Breast epithelium (tissue), 4 donors: ENCODE measurements at regions of chr6 and their contacts with region 1.

Region 1: DNA sequence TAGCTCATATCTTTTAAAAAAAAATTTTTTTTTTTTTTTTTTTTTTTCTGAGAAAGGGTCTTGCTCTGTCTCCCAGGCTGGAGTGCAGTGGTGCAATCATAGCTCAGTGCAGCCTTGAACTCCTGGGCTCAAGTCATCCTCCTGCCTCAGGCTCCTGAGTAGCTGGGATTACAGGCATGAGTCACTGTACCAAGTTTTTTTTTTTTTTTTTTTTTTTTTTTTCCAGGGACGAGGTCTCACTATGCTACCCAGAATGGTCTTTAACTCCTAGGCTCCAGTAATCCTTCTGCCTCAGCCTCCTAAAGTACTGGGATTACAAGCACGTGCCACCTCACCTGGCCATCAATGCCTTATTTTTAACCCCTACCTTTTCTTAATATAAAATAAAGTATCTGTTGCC is 27.8 kb downstream of the GCLC start:
- DNase-seq: no peak
- H3K4me3 ChIP-seq: no peak overlapping the region
- H3K27ac ChIP-seq: no peak overlapping the region
- H3K4me1 ChIP-seq: no peaks in the 10 kb centered on the region
- H3K27me3 ChIP-seq: no peaks in the 10 kb centered on the region
- CTCF ChIP-seq: no peak
- POLR2A ChIP-seq: no peak

Region 2: DNA sequence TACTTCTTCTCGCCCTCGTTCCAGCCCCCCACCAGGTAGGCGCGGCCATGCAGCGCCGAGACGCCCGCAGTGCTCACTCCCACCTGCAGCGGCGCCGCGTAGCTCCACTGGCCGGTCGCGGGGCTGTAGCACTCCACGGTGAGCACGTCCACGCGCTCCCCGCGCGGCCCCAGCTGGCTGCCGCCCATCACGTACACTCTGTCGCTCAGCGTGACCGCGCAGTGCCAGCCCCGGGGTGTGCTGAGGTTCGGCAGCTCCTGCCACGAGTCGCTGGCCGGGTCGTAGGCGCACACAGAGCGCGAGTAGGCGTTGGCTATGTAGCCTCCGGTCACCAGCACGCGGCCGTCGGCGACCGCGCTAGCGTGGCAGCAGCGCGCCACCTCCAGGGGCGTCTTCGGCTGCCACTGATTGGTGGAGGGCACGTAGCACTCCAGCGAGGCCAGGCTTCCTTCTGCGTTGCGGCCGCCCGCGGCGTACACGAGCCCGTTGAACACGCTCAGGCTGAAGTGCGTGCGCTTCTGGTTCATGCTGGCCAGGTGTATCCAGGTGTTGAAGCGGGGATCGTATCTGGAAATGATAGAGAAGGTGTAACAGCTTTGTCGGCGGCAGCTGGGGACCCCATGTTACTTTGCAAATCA is 134.8 kb after region 1 on chr6:
- intact Hi-C with region 1: loop called (anchors 10 kb)
- DNase-seq: peak; percentile 52 to 75
- H3K4me3 ChIP-seq: peak overlapping the region; percentile 45 to 90 (median 67)
- H3K27ac ChIP-seq: peak overlapping the region; percentile 74 to 86
- H3K4me1 ChIP-seq: no peaks in the 10 kb centered on the region
- H3K27me3 ChIP-seq: no peaks in the 10 kb centered on the region
- CTCF ChIP-seq: peak in 2 of 3 donors; percentile 22 to 43
- POLR2A ChIP-seq: no peak